ENCODE measurements at regions of chr6 and their contacts with region 1.

Region 1: DNA sequence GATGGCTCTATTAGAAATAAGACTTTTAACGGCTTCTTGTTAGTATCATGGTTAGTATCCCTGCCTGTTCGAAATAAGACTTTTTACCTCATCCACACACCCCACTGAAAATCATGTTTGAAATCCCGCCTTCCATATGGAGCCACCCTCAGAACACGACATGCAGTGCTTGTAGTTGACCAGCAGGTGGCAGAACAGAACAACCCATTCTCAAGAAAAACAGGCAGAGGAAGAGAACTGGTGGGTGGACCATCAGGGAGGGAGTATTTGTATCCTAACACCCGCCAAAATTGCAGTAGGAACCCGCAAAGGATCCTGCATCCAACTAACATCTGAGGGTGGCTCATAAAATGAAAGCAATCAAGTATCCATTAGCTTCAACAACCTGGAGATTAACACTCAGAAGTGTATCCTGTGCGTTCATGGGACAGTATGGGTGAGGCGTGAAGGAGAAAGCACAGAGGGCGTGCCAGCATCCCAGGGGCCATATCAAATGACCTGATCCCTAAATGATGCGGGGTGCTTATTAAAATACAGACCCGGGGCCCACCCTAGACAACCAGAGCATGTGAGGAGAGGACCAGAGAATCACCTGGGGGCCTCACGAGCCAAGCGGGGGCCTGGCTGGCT is 89.6 kb upstream of the NHSL1 start:
- DNase-seq: peak; percentile 58
- ATAC-seq: peak; percentile 46
- H3K4me3 Mint-ChIP-seq: no peak overlapping the region
- H3K27ac Mint-ChIP-seq: no peak overlapping the region
- H3K4me1 Mint-ChIP-seq: peaks cover 29% of the 10 kb centered on the region
- H3K27me3 Mint-ChIP-seq: no peaks in the 10 kb centered on the region
- CTCF ChIP-seq: peak; percentile 95

Region 2: DNA sequence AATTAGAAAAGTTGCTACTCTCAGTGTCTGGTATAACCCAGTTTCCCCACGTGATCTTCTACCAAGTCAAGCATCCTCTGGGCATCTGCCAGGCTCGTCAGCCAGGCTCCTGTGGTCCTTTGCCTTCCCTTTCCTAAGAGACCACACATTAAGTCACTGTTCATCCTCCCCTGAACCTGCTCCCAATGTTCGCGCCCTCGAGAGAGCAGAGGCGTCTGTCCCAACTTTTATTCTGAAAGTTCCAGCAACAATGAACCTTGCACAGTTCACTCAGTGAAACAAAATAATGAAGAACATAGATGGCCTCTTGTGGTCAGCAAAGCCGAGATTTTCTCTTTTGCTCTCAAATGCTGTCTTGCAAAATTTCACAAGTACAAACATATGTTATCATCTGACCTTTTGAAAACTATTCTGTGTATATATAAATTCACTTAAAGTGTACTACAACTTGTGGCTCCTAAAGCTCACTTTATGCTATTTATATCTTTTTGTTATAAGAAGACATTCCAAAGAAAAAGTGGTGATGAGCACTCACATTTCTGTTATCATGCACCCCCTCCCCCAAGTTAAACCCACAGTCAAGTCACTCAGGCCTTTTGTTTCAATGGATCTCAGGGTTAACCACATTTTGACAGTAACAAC is 50.4 kb before region 1 on chr6:
- CTCF ChIA-PET with region 1: no interaction called
- POLR2A ChIA-PET with region 1: no interaction called
- intact Hi-C with region 1: no loop called
- DNase-seq: no peak
- ATAC-seq: no peak
- H3K4me3 Mint-ChIP-seq: no peak overlapping the region
- H3K27ac Mint-ChIP-seq: no peak overlapping the region
- H3K4me1 Mint-ChIP-seq: no peaks in the 10 kb centered on the region
- H3K27me3 Mint-ChIP-seq: peaks cover 6% of the 10 kb centered on the region
- CTCF ChIP-seq: no peak

Region 3: DNA sequence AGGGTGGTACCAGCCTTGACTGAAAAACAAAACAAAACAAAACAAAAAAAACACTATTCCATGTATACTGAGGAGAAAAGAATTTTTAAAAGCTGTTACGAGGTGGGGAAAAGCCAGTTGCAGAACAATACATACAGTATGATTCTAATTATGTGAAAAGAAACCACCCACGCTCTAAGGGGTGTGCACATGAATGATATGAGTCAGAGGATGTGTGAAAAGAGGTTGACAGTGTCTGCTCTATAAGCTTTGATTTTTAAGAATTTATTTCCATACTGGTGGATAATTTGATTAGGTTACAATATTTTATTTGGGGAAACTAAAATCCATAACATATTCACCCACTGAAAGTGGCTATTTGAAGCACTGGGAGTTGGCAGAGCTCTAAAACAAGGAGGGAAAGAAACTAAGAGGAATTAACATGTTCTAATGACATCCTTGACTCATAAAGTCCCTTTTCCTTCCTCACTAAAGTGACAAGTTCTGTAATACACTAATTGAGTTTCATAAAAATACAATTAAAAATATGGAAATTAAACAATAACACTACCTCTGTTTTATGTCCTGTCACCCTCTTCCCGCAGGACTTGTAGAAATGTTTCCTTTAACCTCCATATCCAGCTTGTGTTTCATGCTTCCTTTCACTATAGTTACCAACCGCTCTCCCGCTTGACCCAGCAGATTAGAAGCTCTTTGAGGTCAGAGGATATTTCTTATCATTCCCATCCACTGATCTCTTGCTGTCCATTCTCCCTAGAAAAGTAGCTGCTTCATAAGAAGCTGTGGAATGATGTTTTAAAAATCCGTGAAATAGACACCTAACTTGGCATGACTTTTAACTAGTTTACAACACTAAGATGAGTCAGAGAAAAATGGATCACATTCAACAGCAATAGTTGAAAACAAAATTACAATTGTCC is 66.1 kb after region 1 on chr6:
- CTCF ChIA-PET with region 1: interaction called, 12 read pairs
- POLR2A ChIA-PET with region 1: interaction called, 3 read pairs
- intact Hi-C with region 1: no loop called
- DNase-seq: peak; percentile 77
- ATAC-seq: peak; percentile 97
- H3K4me3 Mint-ChIP-seq: no peak overlapping the region
- H3K27ac Mint-ChIP-seq: no peak overlapping the region
- H3K4me1 Mint-ChIP-seq: peaks cover 18% of the 10 kb centered on the region
- H3K27me3 Mint-ChIP-seq: peaks cover 27% of the 10 kb centered on the region
- CTCF ChIP-seq: no peak

Region 4: GRCh38 chr6:138765896-138766655 is 177.2 kb after region 1 on chr6:
- CTCF ChIA-PET with region 1: interaction called, 164 read pairs
- POLR2A ChIA-PET with region 1: no interaction called
- intact Hi-C with region 1: loop called (anchors 2 kb)
- DNase-seq: no peak
- ATAC-seq: peak; percentile 37
- H3K4me3 Mint-ChIP-seq: no peak overlapping the region
- H3K27ac Mint-ChIP-seq: no peak overlapping the region
- H3K4me1 Mint-ChIP-seq: peaks cover 10% of the 10 kb centered on the region
- H3K27me3 Mint-ChIP-seq: no peaks in the 10 kb centered on the region
- CTCF ChIP-seq: peak; percentile 89

Region 5: DNA sequence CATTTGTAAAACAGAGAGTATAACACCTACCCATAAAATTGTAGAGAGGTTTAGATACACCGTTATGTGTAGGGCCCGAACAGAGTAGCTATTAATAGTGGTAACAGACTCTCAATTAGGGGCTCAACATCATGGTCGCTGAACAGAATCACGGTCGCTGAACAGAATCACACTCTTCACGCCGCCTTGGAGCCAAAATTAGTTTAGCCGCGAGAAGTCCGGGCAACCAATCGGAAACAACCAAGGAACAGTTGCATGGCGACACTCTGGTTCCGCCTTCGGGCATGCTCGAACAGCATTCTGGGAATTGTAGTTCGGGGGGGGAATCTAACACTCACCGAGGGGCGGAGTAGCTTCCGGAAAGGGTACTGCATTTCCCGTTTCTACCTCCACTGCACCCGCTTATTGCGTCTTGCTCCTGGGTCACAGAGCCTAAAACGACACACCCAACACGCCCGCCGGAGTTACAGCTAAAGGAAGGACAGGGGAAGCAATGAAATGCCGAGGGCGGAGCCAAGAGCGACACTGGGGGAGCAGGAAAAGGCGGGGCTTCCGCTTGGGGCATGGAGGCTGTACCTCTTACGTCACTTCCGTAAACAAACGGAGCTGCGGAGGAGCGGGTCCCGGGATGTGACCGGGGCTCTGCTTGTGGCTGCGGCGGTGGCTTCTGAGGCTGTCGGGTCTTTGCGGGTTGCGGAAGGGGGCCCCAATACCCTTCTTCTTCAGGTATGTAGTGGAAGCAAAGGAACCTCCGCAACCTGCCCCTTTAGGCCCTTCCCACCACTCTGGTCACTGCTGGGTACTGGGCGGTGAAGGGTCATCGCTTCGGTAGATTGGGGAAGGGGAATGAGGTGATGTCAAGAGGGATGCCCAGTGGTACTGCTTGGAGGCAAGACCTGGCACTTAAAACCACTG is 184.5 kb after region 1 on chr6 and contains the start of gene CCDC28A:
- CTCF ChIA-PET with region 1: interaction called, 53 read pairs
- POLR2A ChIA-PET with region 1: interaction called, 3 read pairs
- intact Hi-C with region 1: no loop called
- DNase-seq: peak; percentile 96
- ATAC-seq: peak; percentile 89
- H3K4me3 Mint-ChIP-seq: peak within 1 kb of the TSS; percentile 99
- H3K27ac Mint-ChIP-seq: peak within 1 kb of the TSS; percentile 100
- H3K4me1 Mint-ChIP-seq: peaks cover 28% of the 10 kb centered on the region
- H3K27me3 Mint-ChIP-seq: no peaks in the 10 kb centered on the region
- CTCF ChIP-seq: no peak
- total RNA-seq, gene CCDC28A: 15.0 to 15.7 TPM

Region 6: GRCh38 chr6:138987640-138988468 is 398.9 kb after region 1 on chr6 and contains the start of gene REPS1:
- CTCF ChIA-PET with region 1: no interaction called
- POLR2A ChIA-PET with region 1: no interaction called
- intact Hi-C with region 1: no loop called
- DNase-seq: peak; percentile 94
- ATAC-seq: peak; percentile 96
- H3K4me3 Mint-ChIP-seq: peak within 1 kb of the TSS; percentile 81
- H3K27ac Mint-ChIP-seq: peak within 1 kb of the TSS; percentile 92
- H3K4me1 Mint-ChIP-seq: peaks cover 8% of the 10 kb centered on the region
- H3K27me3 Mint-ChIP-seq: no peaks in the 10 kb centered on the region
- CTCF ChIP-seq: peak; percentile 98
- total RNA-seq, gene REPS1: 44.9 to 46.6 TPM

Measured in activated CD8-positive, alpha-beta T cell treated with anti-CD3 and anti-CD28 coated beads for 36 hours (primary cell).